CD4-positive, alpha-beta memory T cell (primary cell): ENCODE measurements at regions of chr2 and their contacts with region 1.

Region 1: GRCh38 chr2:108533832-108534583 is at the start of gene LIMS1:
- DNase-seq: peak; percentile 75 to 87 (median 81)
- H3K4me3 ChIP-seq: peak within 1 kb of the TSS; percentile 34 to 92
- H3K4me3 Mint-ChIP-seq: peak within 1 kb of the TSS; percentile 92 to 96 (median 94)
- H3K27ac ChIP-seq: peak within 1 kb of the TSS; percentile 67
- H3K27ac Mint-ChIP-seq: peak within 1 kb of the TSS; percentile 79 to 93 (median 90)
- H3K4me1 ChIP-seq: peaks cover 28% of the 10 kb centered on the region
- H3K4me1 Mint-ChIP-seq: peaks cover 19 to 33% (median 25%) of the 10 kb centered on the region in 4 donors
- H3K27me3 ChIP-seq: no peaks in the 10 kb centered on the region
- H3K27me3 Mint-ChIP-seq: no peaks in the 10 kb centered on the region
- total RNA-seq, gene LIMS1: 126 to 130 TPM

Region 2: GRCh38 chr2:107525406-107525805 is 1008.6 kb before region 1 on chr2:
- CTCF ChIA-PET with region 1: no interaction called
- POLR2A ChIA-PET with region 1: no interaction called
- intact Hi-C with region 1: no loop called
- DNase-seq: no peak
- H3K4me3 ChIP-seq: no peak overlapping the region
- H3K4me3 Mint-ChIP-seq: no peak overlapping the region
- H3K27ac ChIP-seq: no peak overlapping the region
- H3K27ac Mint-ChIP-seq: no peak overlapping the region
- H3K4me1 ChIP-seq: no peaks in the 10 kb centered on the region
- H3K4me1 Mint-ChIP-seq: no peaks in the 10 kb centered on the region
- H3K27me3 ChIP-seq: no peaks in the 10 kb centered on the region
- H3K27me3 Mint-ChIP-seq: no peaks in the 10 kb centered on the region

Region 3: DNA sequence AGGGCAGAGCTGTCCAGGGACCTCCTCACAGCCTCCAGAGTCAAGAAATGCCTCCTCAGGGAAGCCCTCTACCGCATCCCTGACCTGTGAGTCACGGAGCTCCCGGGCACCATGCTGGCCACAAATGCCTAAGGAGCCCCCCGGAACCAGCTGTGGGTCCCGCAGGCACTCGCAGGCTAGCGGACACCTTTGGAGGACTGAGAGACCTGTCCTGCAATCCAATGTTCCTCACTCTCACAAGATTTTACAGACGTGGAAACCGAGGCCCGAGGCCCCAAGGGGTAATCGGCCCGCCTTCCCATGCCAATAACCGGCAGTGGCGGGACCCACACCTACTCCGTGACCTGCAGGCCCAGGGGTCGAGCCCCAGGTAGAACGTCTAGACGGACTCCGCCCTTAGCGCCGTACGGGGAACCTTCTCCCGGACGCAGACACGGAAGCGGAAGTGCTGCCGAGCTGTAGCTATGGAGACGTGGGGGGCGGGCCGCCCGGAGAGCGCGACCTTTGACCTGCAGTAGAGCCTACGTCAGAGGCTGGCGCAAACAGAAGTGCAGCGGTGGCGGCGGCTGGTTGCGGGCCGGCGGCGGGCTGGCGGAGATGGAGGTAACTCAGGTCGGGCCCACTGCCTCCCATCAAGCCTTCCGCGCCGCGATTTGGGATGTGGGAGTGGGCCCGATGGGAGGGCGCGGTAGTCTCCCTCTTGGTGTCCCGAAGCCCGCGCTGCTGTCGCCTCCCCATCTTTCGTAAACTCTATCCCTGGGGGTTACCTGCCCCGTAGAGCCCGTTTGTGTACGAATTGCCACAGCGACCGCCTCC is 85.1 kb before region 1 on chr2 and contains the start of gene GCC2:
- CTCF ChIA-PET with region 1: interaction called, 3 read pairs
- POLR2A ChIA-PET with region 1: interaction called, 13 read pairs
- intact Hi-C with region 1: loop called (anchors 1 kb)
- DNase-seq: peak; percentile 96 to 97 (median 96)
- H3K4me3 ChIP-seq: peak within 1 kb of the TSS; percentile 83 to 100
- H3K4me3 Mint-ChIP-seq: peak within 1 kb of the TSS; percentile 95 to 100 (median 98)
- H3K27ac ChIP-seq: peak within 1 kb of the TSS; percentile 97
- H3K27ac Mint-ChIP-seq: peak within 1 kb of the TSS; percentile 98 to 100 (median 99)
- H3K4me1 ChIP-seq: peaks cover 32% of the 10 kb centered on the region
- H3K4me1 Mint-ChIP-seq: peaks cover 20 to 50% (median 34%) of the 10 kb centered on the region in 4 donors
- H3K27me3 ChIP-seq: no peaks in the 10 kb centered on the region
- H3K27me3 Mint-ChIP-seq: no peaks in the 10 kb centered on the region
- total RNA-seq, gene GCC2: 209 to 232 TPM

Region 4: DNA sequence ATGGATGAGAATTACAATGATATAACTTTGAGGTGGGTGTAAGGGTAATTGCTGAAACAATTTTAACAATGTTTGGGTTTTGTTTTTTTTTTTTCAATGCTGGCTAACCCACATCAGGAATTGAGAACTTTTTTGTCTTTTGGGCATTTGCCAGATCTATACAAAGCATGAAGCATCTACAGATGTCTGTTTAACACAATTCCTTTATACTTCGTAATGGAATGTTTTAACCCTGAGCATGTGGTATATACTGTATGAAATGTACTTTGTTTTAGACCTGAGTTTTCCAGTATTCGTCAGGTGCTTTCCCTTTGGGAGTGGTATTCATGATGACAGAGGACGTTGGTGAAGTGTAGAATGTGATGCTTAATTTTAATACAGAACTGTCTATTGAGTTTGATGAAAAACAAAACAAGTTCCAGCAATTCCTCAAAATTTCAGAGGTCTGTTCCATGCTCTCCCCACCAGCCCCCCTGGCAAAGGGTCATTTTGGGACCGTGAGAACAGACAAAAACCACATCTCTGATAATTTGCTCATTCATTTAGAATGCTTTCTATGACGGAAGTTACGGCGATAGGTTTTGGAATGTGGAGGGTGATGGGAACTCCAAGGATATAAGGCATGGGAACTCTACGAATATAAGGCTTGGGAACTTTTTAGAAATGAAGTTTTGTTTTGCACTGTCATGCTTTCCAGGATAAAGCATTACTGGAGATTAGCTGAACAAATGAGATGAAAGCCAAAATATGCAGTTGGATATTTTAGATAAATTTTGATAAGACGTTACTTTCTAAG is 14.4 kb after region 1 on chr2:
- CTCF ChIA-PET with region 1: no interaction called
- POLR2A ChIA-PET with region 1: no interaction called
- intact Hi-C with region 1: no loop called
- DNase-seq: no peak
- H3K4me3 ChIP-seq: no peak overlapping the region
- H3K4me3 Mint-ChIP-seq: no peak overlapping the region
- H3K27ac ChIP-seq: no peak overlapping the region
- H3K27ac Mint-ChIP-seq: no peak overlapping the region
- H3K4me1 ChIP-seq: no peaks in the 10 kb centered on the region
- H3K4me1 Mint-ChIP-seq: peaks cover 0 to 5% (median 2%) of the 10 kb centered on the region in 4 donors
- H3K27me3 ChIP-seq: no peaks in the 10 kb centered on the region
- H3K27me3 Mint-ChIP-seq: no peaks in the 10 kb centered on the region

Region 5: DNA sequence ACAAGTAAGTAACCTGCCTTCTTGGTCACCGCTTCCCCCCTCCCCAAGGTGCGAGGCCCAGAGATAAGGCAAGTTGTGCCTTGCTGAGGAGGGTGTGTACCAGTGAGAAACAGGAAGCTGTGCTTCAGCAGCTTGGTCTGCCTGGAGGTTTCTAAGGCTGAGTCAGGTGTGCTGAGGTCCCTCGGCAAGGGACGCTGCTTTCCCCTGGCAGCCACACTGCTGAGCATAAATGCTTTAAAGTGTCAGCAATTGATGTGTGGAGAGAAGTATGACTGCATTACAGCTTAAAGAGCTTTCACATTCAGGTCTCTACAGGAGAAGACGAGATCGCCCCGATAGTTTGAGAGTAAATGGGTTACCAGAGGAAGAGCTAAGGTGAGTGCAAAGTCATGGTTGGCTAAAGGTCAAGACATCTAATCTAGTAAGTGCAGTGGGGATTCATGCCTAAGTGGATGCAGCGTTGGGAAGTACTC is 87.1 kb after region 1 on chr2:
- CTCF ChIA-PET with region 1: no interaction called
- POLR2A ChIA-PET with region 1: interaction called, 7 read pairs
- intact Hi-C with region 1: loop called (anchors 10 kb)
- DNase-seq: peak; percentile 79 to 92 (median 84)
- H3K4me3 ChIP-seq: peak overlapping the region; percentile 65 to 86
- H3K4me3 Mint-ChIP-seq: peak overlapping the region; percentile 91 to 97 (median 92)
- H3K27ac ChIP-seq: peak overlapping the region; percentile 69
- H3K27ac Mint-ChIP-seq: peak overlapping the region; percentile 91 to 98 (median 96)
- H3K4me1 ChIP-seq: peaks cover 88% of the 10 kb centered on the region
- H3K4me1 Mint-ChIP-seq: peaks cover 52 to 86% (median 66%) of the 10 kb centered on the region in 4 donors
- H3K27me3 ChIP-seq: no peaks in the 10 kb centered on the region
- H3K27me3 Mint-ChIP-seq: no peaks in the 10 kb centered on the region

Region 6: DNA sequence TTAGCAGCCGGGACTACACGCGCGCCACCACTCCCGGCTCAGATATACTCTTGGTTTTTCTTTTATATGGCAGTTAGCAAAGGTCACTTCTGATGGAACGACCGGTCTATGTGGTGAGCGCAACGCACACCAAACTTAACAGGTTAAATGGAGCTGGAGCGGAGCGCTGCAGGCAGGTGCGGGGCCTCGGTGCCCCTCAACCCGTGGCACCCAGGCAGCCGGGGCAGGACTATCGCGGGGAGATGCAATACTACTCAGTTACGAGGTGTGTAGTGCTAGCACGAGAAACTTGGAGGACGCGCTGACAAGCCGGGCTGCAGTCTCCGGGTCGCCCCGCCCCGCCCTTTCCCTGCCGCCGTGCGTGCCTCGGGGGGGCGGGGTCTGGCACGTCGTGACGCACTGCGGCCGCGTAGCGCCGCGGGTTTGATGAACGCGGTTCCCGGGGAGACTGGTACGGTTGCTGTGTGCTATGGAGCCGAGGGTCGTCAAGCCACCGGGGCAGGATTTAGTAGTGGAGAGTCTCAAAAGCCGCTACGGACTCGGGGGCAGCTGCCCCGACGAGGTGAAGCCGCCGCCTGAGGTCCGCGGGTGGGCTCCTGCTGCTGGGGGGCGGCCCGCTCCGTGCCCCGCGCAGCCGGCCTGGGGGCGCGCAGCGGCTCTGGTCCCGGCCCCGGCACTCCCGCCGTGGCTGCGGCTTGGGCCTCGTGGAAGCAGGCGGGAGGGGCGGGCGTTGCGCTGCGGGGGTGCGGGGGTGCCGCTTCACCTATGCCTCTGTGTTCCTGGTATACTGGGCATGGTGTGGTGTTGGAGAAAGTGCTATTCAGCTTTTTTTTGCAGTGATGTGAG is 252.6 kb after region 1 on chr2 and contains the start of gene CCDC138:
- CTCF ChIA-PET with region 1: no interaction called
- POLR2A ChIA-PET with region 1: no interaction called
- intact Hi-C with region 1: loop called (anchors 5 kb)
- DNase-seq: peak; percentile 89 to 91 (median 90)
- H3K4me3 ChIP-seq: peak within 1 kb of the TSS; percentile 37 to 78
- H3K4me3 Mint-ChIP-seq: peak within 1 kb of the TSS; percentile 93 to 100 (median 99)
- H3K27ac ChIP-seq: peak within 1 kb of the TSS; percentile 78
- H3K27ac Mint-ChIP-seq: peak within 1 kb of the TSS; percentile 80 to 99 (median 98)
- H3K4me1 ChIP-seq: peaks cover 15% of the 10 kb centered on the region
- H3K4me1 Mint-ChIP-seq: peaks cover 9 to 20% (median 11%) of the 10 kb centered on the region in 4 donors
- H3K27me3 ChIP-seq: no peaks in the 10 kb centered on the region
- H3K27me3 Mint-ChIP-seq: no peaks in the 10 kb centered on the region
- total RNA-seq, gene CCDC138: 4.2 to 4.9 TPM